OCI-LY7 (cell line): ENCODE measurements at regions of chr9 and their contacts with region 1.

Region 1: DNA sequence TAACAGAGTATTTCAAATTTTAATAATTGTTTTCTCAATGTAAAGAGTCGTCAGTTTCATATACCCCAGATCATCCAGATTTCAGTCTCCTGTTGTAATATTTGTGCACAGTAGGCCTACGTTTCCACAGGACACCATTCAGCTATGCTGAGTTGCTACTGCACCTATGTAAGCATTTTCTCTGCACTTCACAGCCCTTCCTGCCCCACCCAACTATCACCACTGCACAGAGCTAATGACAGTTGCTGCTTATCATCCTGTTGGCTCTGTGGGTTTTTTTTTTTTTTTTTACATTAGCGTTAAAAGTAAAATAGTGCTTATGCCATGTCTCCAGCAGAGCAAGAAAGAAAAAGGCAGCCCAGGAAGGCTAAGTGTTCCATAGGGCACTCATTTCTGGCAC is 5.9 kb upstream of the PRKACG start:
- DNase-seq: no peak
- H3K4me3 ChIP-seq: no peak overlapping the region
- H3K27ac ChIP-seq: no peak overlapping the region
- H3K4me1 ChIP-seq: no peaks in the 10 kb centered on the region
- CTCF ChIP-seq: no peak

Region 2: DNA sequence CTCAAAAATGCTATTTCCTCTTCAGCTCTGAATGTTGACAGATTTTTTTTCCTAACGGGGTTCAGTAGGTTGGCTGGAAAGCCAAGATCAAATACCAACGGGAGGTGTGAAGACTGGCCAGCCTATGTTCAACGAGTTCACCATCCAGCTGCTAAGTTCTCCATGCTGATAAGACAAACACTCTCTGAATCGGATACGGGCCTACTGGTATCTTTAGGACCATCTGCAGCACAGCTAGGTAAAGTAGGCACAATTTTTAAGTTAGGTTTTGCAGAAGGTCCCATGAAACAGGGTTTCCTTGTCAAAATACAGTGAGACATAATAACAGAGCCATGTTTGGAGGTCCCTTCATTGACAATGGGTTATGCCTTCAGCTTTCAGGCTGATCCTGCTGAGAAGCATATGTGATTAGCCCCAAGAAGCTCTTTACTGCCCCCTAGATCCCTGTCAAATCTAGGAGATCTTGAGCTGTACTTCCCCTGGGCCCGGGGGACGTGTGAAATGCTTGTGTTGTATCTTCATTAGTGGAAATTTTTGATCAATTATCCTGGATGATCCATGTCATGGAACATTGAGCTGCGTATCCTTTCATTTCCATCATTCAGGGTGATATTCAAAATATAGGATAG is 602.8 kb before region 1 on chr9:
- CTCF ChIA-PET with region 1: no interaction called
- POLR2A ChIA-PET with region 1: no interaction called
- intact Hi-C with region 1: loop called (anchors 5 kb)
- DNase-seq: peak; percentile 46
- H3K4me3 ChIP-seq: no peak overlapping the region
- H3K27ac ChIP-seq: no peak overlapping the region
- H3K4me1 ChIP-seq: no peaks in the 10 kb centered on the region
- CTCF ChIP-seq: peak; percentile 72